H1 (cell line): ENCODE measurements at regions of chr11 and their contacts with region 1.

Region 1: DNA sequence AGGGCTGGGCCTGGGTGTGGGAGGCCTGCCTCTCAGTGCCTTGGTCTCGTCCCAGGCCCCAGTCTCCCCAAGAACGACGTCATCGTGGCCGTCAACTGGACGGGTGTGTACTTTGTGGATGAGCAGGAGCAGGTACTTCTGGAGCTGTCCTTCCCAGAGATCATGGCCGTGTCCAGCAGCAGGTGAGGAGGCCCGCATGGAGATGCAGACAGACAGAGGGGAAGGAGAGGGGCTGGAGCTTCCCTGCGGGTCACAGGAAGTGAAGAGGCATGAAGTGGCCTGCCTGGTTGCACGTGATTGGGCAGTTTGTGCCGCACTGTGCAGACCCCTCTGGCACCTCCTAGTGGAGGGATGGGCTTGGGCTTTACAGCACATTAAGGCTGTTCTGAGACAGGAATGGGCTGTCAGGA is 70.4 kb downstream of the MYO7A start:
- DNase-seq: peak; percentile 44 to 85
- H3K4me3 ChIP-seq: no peak overlapping the region
- H3K27ac ChIP-seq: no peak overlapping the region
- H3K4me1 ChIP-seq: no peaks in the 10 kb centered on the region; a peak in 1 of 7 replicates
- H3K27me3 ChIP-seq: no peaks in the 10 kb centered on the region
- CTCF ChIP-seq: peak in 2 of 3 experiments; percentile 66 to 96; a peak in 3 of 4 replicates
- EP300 ChIP-seq: no peak
- POLR2A ChIP-seq: no peak
- RAD21 ChIP-seq: peak; percentile 58 to 68

Region 2: GRCh38 chr11:77211040-77211922 is 12.8 kb after region 1 on chr11:
- CTCF ChIA-PET with region 1: interaction called, 35 read pairs
- POLR2A ChIA-PET with region 1: no interaction called
- DNase-seq: no peak
- H3K4me3 ChIP-seq: no peak overlapping the region
- H3K27ac ChIP-seq: no peak overlapping the region
- H3K4me1 ChIP-seq: no peaks in the 10 kb centered on the region
- H3K27me3 ChIP-seq: no peaks in the 10 kb centered on the region
- CTCF ChIP-seq: no peak
- EP300 ChIP-seq: no peak
- POLR2A ChIP-seq: no peak
- RAD21 ChIP-seq: no peak

Region 3: DNA sequence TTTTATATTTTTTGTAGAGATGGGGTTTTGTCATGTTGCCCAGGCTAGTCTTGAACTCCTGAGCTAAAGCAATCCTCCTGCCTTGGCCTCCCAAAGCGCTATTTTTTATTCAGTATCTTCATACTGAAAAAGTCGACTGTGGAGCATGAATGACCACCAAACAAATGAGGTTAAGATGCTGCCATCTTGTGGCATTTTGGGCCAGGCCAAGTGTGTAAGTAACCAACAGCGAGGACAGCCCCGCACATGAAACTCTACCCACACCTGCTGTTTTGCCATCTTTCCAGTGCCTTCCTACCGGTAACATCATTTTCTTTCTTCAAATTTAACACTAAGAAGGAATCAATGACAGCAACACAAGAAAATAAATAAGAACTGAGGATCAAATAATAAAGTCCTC is 359.1 kb after region 1 on chr11:
- CTCF ChIA-PET with region 1: interaction called, 30 read pairs
- POLR2A ChIA-PET with region 1: interaction called, 4 read pairs
- DNase-seq: peak in 1 of 2 experiments; percentile 19
- H3K4me3 ChIP-seq: no peak overlapping the region
- H3K27ac ChIP-seq: no peak overlapping the region
- H3K4me1 ChIP-seq: no peaks in the 10 kb centered on the region
- H3K27me3 ChIP-seq: no peaks in the 10 kb centered on the region
- CTCF ChIP-seq: peak; percentile 56 to 73 (median 63)
- EP300 ChIP-seq: no peak
- POLR2A ChIP-seq: no peak
- RAD21 ChIP-seq: peak; percentile 82 to 85